Activated naive CD8-positive, alpha-beta T cell treated with anti-CD3 and anti-CD28 coated beads, Interleukin-2, amount 10 ng/mL, durations not matched to agents 7 days and 5 days (primary cell): ENCODE measurements at regions of chr3 and their contacts with region 1.

Region 1: DNA sequence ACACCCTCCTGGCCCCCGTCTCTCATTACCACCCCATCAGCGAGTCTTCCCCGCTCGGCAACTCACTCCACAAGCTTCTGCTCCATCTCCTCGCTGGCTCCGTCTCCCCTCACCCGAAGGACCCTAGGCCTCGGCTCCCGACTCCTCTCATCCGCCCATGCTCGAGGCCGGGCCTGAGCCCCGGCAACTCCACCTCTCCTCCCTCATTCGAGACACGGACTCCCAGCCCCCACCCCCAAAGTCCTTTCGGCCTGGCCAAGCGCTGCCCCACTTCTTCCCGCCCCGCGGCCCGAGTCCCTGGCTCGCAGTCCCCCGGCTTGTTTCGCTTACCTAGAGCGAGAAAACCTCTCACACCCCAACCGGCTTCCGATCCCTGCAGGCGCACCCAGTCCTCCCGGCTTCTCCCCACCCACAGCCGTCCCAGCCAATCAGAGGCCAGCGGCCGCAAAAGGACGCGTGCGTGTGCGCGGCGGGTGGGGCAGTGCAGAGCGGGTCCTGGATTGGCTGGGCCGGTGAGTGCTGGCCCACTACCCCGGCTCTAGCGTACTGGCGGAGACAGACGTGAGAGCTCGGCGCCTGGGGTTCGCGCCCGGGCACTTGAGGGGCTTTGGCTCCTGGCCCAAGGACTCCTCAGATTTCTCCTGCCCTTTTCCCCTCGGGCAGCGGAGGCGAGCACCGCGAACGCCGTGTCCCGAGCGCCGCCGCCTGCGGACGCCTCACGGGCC is at the start of gene HIGD1A:
- DNase-seq: peak; percentile 91
- ATAC-seq: peak; percentile 100
- H3K4me3 Mint-ChIP-seq: peak within 1 kb of the TSS; percentile 98
- H3K27ac Mint-ChIP-seq: peak within 1 kb of the TSS; percentile 94
- H3K4me1 Mint-ChIP-seq: peaks cover 35% of the 10 kb centered on the region
- H3K27me3 Mint-ChIP-seq: peaks cover 25% of the 10 kb centered on the region
- total RNA-seq, gene HIGD1A: 40.3 to 44.5 TPM

Region 2: GRCh38 chr3:42790714-42791229 is 13.5 kb before region 1 on chr3:
- POLR2A ChIA-PET with region 1: interaction called, 11 read pairs
- DNase-seq: no peak
- ATAC-seq: no peak
- H3K4me3 Mint-ChIP-seq: no peak overlapping the region
- H3K27ac Mint-ChIP-seq: no peak overlapping the region
- H3K4me1 Mint-ChIP-seq: peaks cover 12% of the 10 kb centered on the region
- H3K27me3 Mint-ChIP-seq: no peaks in the 10 kb centered on the region